Mammary epithelial cell (primary cell): ENCODE measurements at regions of chr15 and their contacts with region 1.

Region 1: GRCh38 chr15:74781431-74782258 is at the start of gene CSK:
- DNase-seq: peak; percentile 49
- H3K4me3 ChIP-seq: peak within 1 kb of the TSS; percentile 67 to 79 (median 77)
- H3K27ac ChIP-seq: peak within 1 kb of the TSS; percentile 39
- H3K4me1 ChIP-seq: peaks cover 42% of the 10 kb centered on the region
- H3K27me3 ChIP-seq: no peaks in the 10 kb centered on the region
- CTCF ChIP-seq: peak; percentile 32 to 58
- total RNA-seq, gene CSK: 23.2 to 64.6 TPM

Region 2: GRCh38 chr15:74799856-74800547 is 18.4 kb after region 1 on chr15:
- CTCF ChIA-PET with region 1: interaction called, 5 read pairs
- dilution Hi-C with region 1: no loop called
- in situ Hi-C with region 1: no loop called
- intact Hi-C with region 1: loop called (anchors 1 kb)
- DNase-seq: peak; percentile 95
- H3K4me3 ChIP-seq: peak overlapping the region in 1 of 3 experiments; percentile 12
- H3K27ac ChIP-seq: peak overlapping the region; percentile 91
- H3K4me1 ChIP-seq: peaks cover 28% of the 10 kb centered on the region
- H3K27me3 ChIP-seq: no peaks in the 10 kb centered on the region
- CTCF ChIP-seq: peak; percentile 96 to 100

Region 3: DNA sequence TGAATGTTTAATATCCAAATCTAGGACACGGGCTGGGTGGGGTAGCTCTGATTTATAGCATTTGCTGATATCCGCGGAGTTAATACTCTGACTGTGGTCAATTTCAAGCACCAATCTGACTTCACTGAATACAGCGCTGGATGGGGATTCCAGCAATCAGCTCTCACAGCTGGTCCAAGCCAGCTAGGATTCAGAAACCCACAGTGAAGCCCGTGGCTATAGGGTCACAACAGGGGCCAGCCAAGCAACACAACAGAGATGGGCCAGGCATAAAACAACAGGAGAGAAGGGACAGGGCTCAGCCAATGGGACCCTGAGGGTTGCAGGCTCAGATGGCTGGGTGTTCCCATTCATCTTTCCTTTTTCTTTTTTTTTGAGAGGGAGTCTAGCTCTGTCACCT is 25.6 kb after region 1 on chr15:
- CTCF ChIA-PET with region 1: interaction called, 12 read pairs
- dilution Hi-C with region 1: no loop called
- in situ Hi-C with region 1: no loop called
- intact Hi-C with region 1: no loop called
- DNase-seq: no peak
- H3K4me3 ChIP-seq: no peak overlapping the region
- H3K27ac ChIP-seq: no peak overlapping the region
- H3K4me1 ChIP-seq: peaks cover 9% of the 10 kb centered on the region
- H3K27me3 ChIP-seq: no peaks in the 10 kb centered on the region
- CTCF ChIP-seq: no peak

Region 4: DNA sequence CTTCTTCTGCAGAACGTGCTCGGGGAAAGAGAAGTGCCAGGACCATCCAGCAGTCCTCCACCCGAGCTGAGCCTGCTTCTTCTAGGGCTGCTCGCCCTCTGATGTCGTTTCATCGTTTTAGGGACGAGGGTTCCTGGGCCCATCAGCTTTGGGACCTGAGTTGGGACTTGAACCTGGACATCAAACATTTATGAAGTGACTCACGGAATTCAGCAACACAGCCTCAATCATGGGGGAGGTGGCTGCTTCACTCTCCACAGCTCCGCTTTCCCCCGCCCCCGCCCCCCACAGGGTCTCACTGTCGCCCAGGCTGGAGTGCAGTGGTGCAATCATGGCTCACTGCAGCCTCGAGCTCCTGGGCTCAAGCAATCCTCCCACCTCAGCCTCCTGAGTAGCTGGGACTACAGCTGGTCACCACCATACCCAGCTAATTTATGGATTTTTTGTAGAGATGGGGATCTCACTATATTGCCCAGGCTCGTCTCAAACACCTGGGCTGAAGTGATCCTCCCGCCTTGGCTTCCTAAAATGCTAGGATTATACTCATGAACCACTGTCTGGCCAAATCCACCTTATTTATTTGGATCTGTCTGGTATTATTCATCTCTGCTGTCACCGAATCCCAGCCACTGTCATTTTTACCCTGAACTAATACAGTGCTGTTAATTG is 92.2 kb after region 1 on chr15:
- CTCF ChIA-PET with region 1: no interaction called
- dilution Hi-C with region 1: no loop called
- in situ Hi-C with region 1: no loop called
- intact Hi-C with region 1: no loop called
- DNase-seq: no peak
- H3K4me3 ChIP-seq: peak overlapping the region; percentile 31 to 93 (median 70)
- H3K27ac ChIP-seq: peak overlapping the region; percentile 2
- H3K4me1 ChIP-seq: peaks cover 28% of the 10 kb centered on the region
- H3K27me3 ChIP-seq: no peaks in the 10 kb centered on the region
- CTCF ChIP-seq: no peak